Gastrocnemius medialis (tissue), 4 donors: ENCODE measurements at regions of chr16 and their contacts with region 1.

Region 1: DNA sequence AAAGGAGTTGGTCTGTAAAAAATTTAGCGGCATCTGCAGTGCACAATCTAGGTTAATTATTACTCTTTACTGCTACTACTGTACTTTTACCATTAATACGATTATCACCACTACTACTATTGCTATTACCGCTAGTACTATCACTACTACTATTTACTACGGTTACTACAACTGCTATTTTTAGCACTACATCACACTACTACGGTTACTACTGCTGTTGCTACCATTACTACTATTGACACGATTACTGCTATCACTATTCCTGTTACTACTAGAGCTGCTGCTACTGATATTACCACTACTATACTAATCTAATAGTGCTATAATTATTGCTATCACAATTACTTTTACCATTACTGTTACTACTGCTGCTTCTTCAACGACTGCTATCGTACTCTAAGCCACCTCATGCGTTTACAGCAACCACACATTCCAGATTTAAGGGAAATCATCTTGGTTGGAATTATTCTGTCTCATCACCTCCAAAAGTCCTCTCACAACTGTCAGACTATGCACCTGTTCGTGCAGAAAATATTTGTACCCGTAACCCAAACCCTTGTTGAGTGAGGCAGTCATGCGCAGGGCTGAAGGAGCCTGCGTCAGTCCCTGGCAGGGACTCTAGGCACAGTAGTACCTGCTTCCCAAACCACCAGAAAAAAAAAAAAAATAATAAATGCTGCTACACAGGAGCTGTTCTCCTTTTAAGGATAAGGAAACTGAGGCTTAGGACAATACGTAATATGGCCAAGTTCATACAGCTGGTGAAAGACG is 59.5 kb downstream of the MAF start:
- DNase-seq: peak; percentile 68 to 86
- ATAC-seq: peak; percentile 90 to 93
- H3K4me3 ChIP-seq: no peak overlapping the region
- H3K27ac ChIP-seq: peak overlapping the region; percentile 71 to 89 (median 82)
- H3K4me1 ChIP-seq: peaks cover 16 to 18% of the 10 kb centered on the region in 2 donors
- H3K27me3 ChIP-seq: no peaks in the 10 kb centered on the region
- CTCF ChIP-seq: no peak
- POLR2A ChIP-seq: peak; percentile 14 to 20

Region 2: DNA sequence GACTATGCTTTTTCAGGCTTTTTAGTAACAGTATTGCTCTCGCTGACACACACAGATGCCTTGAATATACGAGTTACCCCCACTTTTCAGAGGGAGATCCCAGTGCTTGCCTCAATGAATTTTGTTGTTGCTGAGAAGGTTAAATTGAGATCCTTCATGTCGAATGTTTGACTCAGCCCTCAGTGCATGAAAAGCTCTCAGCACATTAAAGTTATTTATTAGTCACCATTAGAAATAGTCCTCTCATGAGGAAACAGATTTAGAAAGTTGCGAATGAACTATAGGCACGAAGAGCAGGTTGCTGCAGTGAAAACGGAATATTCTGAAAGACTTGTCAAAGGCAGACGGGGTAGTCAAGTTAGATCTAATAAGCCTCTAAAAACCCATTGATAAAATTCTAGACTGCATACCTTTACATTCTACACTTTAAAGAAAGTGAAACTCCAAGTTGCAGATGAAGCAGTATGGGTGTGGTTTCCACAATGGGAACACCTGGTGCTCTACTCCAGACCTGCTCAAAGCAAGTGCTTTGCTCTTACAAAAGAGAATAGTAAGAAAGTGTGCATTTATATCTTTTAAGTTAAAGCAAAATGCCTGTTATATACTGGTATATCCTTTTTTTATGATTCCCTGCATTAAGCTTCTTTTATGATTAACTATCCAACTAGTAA is 178.6 kb before region 1 on chr16:
- in situ Hi-C with region 1: no loop called
- intact Hi-C with region 1: loop called (anchors 1 kb)
- DNase-seq: no peak
- ATAC-seq: peak; percentile 61 to 78
- H3K4me3 ChIP-seq: peak overlapping the region in 3 of 4 donors; percentile 19 to 28 (median 26)
- H3K27ac ChIP-seq: peak overlapping the region; percentile 75 to 81 (median 80)
- H3K4me1 ChIP-seq: peaks cover 26 to 35% of the 10 kb centered on the region in 2 donors
- H3K27me3 ChIP-seq: no peaks in the 10 kb centered on the region
- CTCF ChIP-seq: no peak
- POLR2A ChIP-seq: no peak

Region 3: GRCh38 chr16:79393127-79393526 is 147.9 kb before region 1 on chr16:
- in situ Hi-C with region 1: no loop called
- intact Hi-C with region 1: no loop called
- DNase-seq: no peak
- ATAC-seq: no peak
- H3K4me3 ChIP-seq: no peak overlapping the region
- H3K27ac ChIP-seq: no peak overlapping the region
- H3K4me1 ChIP-seq: peaks cover 0 to 7% of the 10 kb centered on the region in 2 donors
- H3K27me3 ChIP-seq: no peaks in the 10 kb centered on the region
- CTCF ChIP-seq: no peak
- POLR2A ChIP-seq: no peak

Region 4: DNA sequence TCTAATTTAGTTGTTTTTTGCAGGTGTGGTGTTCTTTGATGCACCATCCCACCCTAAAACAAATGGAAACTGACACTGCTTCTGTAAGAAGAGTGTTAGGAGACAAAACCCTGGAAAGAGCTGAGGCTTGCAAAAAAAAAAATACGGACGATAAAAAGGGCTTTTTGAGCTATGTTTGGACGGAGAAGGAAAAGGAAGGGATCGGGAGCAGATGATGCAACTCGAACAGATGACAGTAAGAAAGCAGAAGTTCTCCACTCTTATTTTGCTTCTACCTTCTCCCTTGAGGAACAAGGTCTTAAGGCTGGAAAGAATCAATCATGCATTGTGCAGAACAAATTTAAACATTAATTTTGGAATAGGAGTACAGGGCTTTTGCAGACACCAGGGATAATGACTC is 77.2 kb before region 1 on chr16:
- in situ Hi-C with region 1: no loop called
- intact Hi-C with region 1: no loop called
- DNase-seq: no peak
- ATAC-seq: no peak
- H3K4me3 ChIP-seq: no peak overlapping the region
- H3K27ac ChIP-seq: no peak overlapping the region
- H3K4me1 ChIP-seq: peaks cover 18 to 22% of the 10 kb centered on the region in 2 donors
- H3K27me3 ChIP-seq: no peaks in the 10 kb centered on the region
- CTCF ChIP-seq: no peak
- POLR2A ChIP-seq: no peak

Region 5: DNA sequence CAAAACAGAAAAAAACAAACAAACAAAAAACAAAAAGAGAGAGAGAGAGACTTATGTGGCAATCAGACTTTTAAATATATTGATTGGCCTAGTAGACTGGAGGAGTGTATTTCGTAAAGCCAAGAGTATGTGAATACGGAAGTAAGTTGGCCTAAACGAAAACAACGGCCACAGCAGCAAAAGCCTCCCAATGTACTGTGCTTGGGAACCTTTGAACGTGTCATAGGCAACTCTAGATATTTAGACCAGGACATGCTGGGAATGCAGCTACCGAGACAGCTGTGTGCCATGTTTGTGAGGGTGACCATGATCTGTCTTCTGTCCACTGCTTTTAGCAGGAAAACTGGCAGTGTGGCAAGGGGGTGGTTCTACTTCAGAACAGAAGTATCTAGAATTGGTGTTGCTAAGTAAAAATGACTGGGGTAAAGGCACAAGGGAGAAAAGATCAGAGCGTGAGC is 52.1 kb after region 1 on chr16:
- in situ Hi-C with region 1: loop called in 1 of 4 experiments (anchors 10 kb)
- intact Hi-C with region 1: loop called (anchors 2 kb)
- DNase-seq: peak in 1 of 2 donors; percentile 47
- ATAC-seq: peak; percentile 46 to 49
- H3K4me3 ChIP-seq: peak overlapping the region; percentile 62 to 85 (median 72)
- H3K27ac ChIP-seq: peak overlapping the region; percentile 89 to 95 (median 92)
- H3K4me1 ChIP-seq: peaks cover 38 to 47% of the 10 kb centered on the region in 2 donors
- H3K27me3 ChIP-seq: no peaks in the 10 kb centered on the region
- CTCF ChIP-seq: no peak
- POLR2A ChIP-seq: peak in 1 of 2 donors; percentile 24